Mucosa of descending colon (tissue), 3 donors: ENCODE measurements at regions of chr3 and their contacts with region 1.

Region 1: GRCh38 chr3:112519424-112520001 is 20.2 kb upstream of the BTLA start:
- DNase-seq: peak in 1 of 3 donors; percentile 76
- ATAC-seq: peak; percentile 89
- H3K4me3 ChIP-seq: no peak overlapping the region
- H3K4me1 ChIP-seq: no peaks in the 10 kb centered on the region
- CTCF ChIP-seq: peak; percentile 49

Region 2: GRCh38 chr3:112293368-112294321 is 225.9 kb before region 1 on chr3 and contains the start of gene SLC9C1:
- intact Hi-C with region 1: loop called in 1 of 2 experiments (anchors 10 kb)
- DNase-seq: peak in 2 of 3 donors; percentile 32 to 88
- ATAC-seq: peak; percentile 89
- H3K4me3 ChIP-seq: no peak within 1 kb of the TSS
- H3K4me1 ChIP-seq: no peaks in the 10 kb centered on the region
- CTCF ChIP-seq: peak; percentile 22
- total RNA-seq, gene SLC9C1: 0.34 to 0.96 (median 0.51) TPM

Region 3: GRCh38 chr3:112327371-112327951 is 192.1 kb before region 1 on chr3:
- intact Hi-C with region 1: loop called (anchors 2 to 10 kb)
- DNase-seq: peak in 1 of 3 donors; percentile 74
- ATAC-seq: peak; percentile 97
- H3K4me3 ChIP-seq: no peak overlapping the region
- H3K4me1 ChIP-seq: no peaks in the 10 kb centered on the region
- CTCF ChIP-seq: peak; percentile 52

Region 4: GRCh38 chr3:112629425-112629824 is 109.9 kb after region 1 on chr3:
- intact Hi-C with region 1: no loop called
- DNase-seq: peak in 1 of 3 donors; percentile 35
- ATAC-seq: peak; percentile 64
- H3K4me3 ChIP-seq: no peak overlapping the region
- H3K4me1 ChIP-seq: no peaks in the 10 kb centered on the region
- CTCF ChIP-seq: no peak